Right ventricle myocardium inferior (tissue), 1 donor: ENCODE measurements at regions of chr22 and their contacts with region 1.

Region 1: GRCh38 chr22:30968924-30969539 is at the start of gene TUG1:
- DNase-seq: peak; percentile 99
- ATAC-seq: peak; percentile 99
- total RNA-seq, gene TUG1: 32.3 TPM

Region 2: GRCh38 chr22:30947816-30948454 is 21.1 kb before region 1 on chr22:
- intact Hi-C with region 1: loop called (anchors 2 kb)
- DNase-seq: no peak
- ATAC-seq: peak; percentile 61

Region 3: GRCh38 chr22:31036671-31037550 is 67.9 kb after region 1 on chr22:
- intact Hi-C with region 1: loop called (anchors 5 kb)
- DNase-seq: no peak
- ATAC-seq: no peak

Region 4: GRCh38 chr22:31046539-31047226 is 77.7 kb after region 1 on chr22:
- intact Hi-C with region 1: loop called (anchors 2 kb)
- DNase-seq: peak; percentile 83
- ATAC-seq: peak; percentile 86

Region 5: DNA sequence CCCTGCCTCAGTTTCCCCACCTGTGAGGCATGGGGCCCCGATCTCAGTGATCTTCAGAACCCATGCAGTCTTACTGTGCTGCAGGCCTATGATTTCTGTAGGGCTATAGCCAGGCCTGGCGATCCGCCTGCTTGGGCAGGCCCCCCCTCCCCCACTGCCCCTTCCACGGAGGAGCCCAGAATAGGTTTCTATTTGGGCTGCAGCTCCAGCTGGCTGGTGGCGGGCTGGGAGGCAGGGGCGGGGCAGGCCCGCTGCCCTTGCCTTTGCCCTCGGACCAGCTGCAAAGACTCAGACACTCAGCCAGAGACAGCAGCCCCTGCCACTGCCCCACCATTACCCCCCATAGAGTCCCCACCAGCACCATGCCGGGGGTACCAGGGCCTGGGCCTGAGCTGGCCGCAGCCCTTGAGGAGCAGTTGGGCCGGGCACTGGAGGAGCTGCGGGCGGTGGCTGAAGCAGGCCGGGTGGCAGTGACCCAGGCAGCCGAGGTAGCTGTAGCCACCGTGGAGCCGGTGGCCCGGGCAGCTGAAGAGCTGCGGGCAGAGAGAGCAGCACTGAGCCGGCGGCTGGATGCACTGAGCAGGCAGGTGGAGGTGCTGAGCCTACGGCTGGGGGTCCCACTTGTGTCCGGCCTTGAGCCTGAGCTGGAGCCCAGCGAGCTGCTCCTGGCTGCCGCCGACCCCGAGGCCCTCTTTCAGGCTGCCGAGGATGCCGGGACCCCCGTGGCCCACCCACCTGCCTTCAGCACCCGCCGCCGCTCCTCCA is 124.2 kb after region 1 on chr22:
- intact Hi-C with region 1: no loop called
- DNase-seq: peak; percentile 79
- ATAC-seq: peak; percentile 78

Region 6: DNA sequence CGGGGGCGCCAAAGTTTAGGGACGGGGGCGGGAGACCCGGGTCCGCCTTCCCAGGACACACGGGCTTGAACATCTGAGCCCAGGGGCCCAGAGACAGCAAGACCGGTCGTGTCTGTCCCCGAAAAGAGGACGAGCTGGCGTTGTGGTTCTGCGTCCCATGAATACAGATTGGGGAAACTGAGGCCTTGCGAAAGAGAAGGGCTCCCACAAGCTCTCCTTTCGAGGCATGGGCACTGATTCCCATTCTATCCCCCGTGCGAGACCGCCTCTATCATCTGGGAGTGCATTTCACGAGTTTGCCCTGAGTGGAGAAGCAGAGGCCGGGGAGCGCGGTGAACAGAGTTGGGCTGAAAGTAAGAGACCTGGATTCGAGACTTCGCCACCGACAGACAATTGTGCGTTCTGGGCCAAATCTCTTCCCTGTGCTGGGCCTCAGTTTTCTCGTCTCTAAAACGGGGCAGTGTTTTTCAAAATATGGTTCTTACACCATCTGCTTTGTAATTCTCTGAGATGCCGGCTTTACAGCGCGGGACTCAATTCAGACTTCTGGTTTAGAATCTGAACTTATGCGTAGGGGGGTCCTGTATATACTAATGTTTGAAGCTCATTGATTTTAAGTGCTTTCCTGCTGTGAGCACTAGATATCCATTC is 191.4 kb after region 1 on chr22:
- intact Hi-C with region 1: loop called (anchors 5 kb)
- DNase-seq: no peak
- ATAC-seq: peak; percentile 40

Region 7: DNA sequence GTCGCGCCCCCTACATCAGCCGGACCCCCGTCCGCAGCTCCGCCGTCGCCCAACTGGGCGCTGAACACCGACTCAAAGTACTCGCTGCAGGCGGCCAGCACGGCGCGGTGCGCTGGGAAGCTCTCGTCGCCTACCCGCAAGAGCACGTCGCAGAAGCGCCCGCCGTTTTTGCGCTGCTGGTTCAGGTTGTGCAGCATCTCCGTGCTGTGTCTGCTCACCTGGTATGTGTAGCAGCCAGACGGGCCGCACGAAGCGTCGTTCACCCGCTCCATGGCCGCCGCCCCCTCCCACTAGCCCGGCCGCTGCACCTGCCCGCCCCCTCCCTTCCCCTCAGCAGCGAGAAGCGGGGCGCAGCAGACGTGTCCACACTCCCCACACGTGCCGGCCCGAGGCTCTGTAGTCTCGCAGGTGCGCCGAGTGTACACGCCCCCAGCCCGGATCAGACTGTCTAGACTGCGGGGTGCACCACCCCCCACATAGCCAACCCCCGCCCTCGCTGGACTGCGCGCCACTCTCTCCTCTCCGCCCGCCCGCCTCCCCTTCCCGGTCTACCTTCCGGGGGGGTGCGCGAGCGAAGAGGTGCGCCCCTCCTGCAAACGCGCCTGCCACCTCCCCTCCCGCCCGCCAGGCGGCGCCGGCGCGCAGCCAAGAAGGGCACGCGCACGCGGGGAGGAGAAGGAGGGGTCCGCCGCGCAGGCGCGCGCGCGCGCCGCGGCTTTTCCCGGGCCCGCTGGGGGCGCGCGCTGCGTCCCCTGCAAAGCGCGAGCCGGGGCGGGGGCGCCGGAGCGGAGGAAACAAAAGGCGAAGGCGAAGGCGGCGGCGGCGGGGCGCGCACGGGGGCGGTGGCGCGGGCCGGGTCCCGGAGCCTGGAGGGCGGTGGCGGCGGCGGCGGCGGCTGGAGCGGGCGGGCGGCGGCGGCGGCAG is 376.6 kb after region 1 on chr22:
- intact Hi-C with region 1: no loop called
- DNase-seq: peak; percentile 95
- ATAC-seq: peak; percentile 72